Dendritic cell treated with granulocyte-macrophage colony-stimulating factor and Interleukin-4, amounts not matched to agents 40 ng/mL and 50 ng/mL, for 4 days (primary cell): ENCODE measurements at regions of chr3 and their contacts with region 1.

Region 1: GRCh38 chr3:151439652-151440129 is 21.2 kb downstream of the IGSF10 start:
- H3K4me3 Mint-ChIP-seq: no peak overlapping the region
- H3K27ac Mint-ChIP-seq: no peak overlapping the region
- H3K4me1 Mint-ChIP-seq: no peaks in the 10 kb centered on the region
- H3K27me3 Mint-ChIP-seq: no peaks in the 10 kb centered on the region

Region 2: DNA sequence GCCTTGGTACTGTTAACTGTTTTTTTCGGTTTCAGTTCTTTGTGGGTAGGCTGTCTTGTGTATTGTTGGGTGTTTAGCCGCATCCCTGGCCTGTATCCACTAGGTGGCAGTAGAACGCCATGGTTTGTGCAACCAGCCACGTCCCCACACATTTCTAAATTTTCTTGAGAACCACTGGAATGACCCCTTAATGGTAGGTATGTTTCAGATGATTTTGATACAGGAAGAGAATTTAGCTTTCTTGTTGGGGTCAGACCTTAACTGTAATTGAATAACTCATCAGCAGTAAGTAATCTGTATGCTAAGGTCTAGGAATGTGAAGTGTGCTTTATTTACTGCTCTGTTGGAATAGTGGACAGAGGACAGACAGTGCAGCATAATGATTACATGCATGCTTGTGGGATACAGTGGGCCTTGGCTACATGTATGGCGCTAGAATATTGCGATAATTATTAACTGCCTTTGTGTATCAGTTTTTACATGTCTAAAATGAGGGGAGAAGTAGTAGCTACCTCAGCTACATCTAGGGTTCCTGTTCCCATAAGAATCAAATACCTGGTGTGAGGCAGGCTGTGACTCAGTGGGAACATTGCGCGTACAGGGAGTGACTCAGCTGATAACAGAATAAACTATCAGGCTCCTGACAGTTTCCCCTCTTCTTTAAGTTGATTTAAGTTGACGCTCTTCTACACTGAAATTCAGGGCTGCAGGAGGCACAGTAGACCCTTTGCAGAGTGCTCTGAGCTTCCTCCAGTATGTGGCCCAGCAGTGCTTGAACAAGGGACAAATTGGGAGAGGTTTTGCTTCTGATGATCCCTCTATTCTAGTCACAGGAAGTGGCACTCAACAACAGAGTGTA is 211.7 kb before region 1 on chr3:
- intact Hi-C with region 1: loop called (anchors 10 kb)
- H3K4me3 Mint-ChIP-seq: peak overlapping the region; percentile 13
- H3K27ac Mint-ChIP-seq: peak overlapping the region; percentile 80
- H3K4me1 Mint-ChIP-seq: peaks cover 75% of the 10 kb centered on the region
- H3K27me3 Mint-ChIP-seq: no peaks in the 10 kb centered on the region

Region 3: DNA sequence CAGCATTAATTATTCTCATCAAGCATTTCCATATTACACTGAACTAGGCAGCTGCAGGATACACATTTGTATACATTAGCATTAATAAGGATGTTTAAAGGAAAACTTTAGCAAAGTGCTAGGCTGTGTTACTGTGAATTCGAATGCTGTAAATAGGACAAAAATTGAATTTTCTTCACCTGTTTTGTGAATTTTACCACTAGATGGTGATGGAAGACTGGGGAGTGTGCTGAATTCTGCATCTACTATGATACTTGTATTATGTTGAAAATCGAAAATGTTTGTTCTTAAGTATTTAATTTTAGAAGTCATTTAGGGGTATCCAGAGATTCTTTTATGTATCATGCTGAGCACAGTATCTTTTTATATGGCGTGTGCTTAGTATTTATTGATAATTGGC is 149.0 kb before region 1 on chr3:
- intact Hi-C with region 1: loop called (anchors 1 kb)
- H3K4me3 Mint-ChIP-seq: no peak overlapping the region
- H3K27ac Mint-ChIP-seq: no peak overlapping the region
- H3K4me1 Mint-ChIP-seq: peaks cover 22% of the 10 kb centered on the region
- H3K27me3 Mint-ChIP-seq: no peaks in the 10 kb centered on the region